Aorta (tissue), 5 donors: ENCODE measurements at regions of chr2 and their contacts with region 1.

Region 1: GRCh38 chr2:41869542-41870264 is 178.1 kb upstream of the PKDCC start:
- DNase-seq: peak; percentile 79 to 95
- ATAC-seq: peak; percentile 89
- H3K4me3 ChIP-seq: no peak overlapping the region
- H3K27ac ChIP-seq: no peak overlapping the region
- H3K4me1 ChIP-seq: no peaks in the 10 kb centered on the region
- H3K27me3 ChIP-seq: no peaks in the 10 kb centered on the region

Region 2: DNA sequence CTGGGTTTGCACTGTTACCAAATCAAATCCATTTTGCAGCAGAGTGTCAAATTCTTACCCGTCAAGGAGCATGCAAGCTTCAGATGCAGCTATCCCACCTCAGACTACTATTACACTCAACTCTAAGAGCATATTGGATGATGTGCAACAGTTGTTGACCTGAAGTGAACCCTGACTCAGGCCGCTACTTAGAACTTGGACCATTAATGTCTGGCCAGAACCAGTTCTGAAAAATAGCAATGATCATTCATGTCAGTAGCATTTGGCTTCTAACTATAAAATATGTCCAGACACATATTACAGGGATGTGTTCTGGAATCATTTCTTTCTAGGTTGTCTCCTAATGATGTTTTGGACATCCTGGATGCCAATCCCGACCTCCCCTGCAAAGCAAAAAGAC is 42.6 kb after region 1 on chr2:
- intact Hi-C with region 1: no loop called
- DNase-seq: peak in 1 of 2 donors; percentile 52
- ATAC-seq: peak; percentile 78
- H3K4me3 ChIP-seq: no peak overlapping the region
- H3K27ac ChIP-seq: no peak overlapping the region
- H3K4me1 ChIP-seq: peaks cover 0 to 8% of the 10 kb centered on the region in 2 donors
- H3K27me3 ChIP-seq: no peaks in the 10 kb centered on the region

Region 3: GRCh38 chr2:42086500-42086953 is 216.8 kb after region 1 on chr2:
- intact Hi-C with region 1: loop called (anchors 1 to 2 kb)
- DNase-seq: no peak
- ATAC-seq: peak; percentile 68
- H3K4me3 ChIP-seq: no peak overlapping the region
- H3K27ac ChIP-seq: no peak overlapping the region
- H3K4me1 ChIP-seq: peaks cover 0 to 4% of the 10 kb centered on the region in 2 donors
- H3K27me3 ChIP-seq: no peaks in the 10 kb centered on the region

Region 4: GRCh38 chr2:42328148-42328833 is 458.6 kb after region 1 on chr2:
- intact Hi-C with region 1: loop called in 1 of 2 experiments (anchors 10 kb)
- DNase-seq: no peak
- ATAC-seq: no peak
- H3K4me3 ChIP-seq: no peak overlapping the region
- H3K27ac ChIP-seq: no peak overlapping the region
- H3K4me1 ChIP-seq: no peaks in the 10 kb centered on the region
- H3K27me3 ChIP-seq: no peaks in the 10 kb centered on the region